A673 (cell line): ENCODE measurements at regions of chr16 and their contacts with region 1.

Region 1: GRCh38 chr16:636206-637080 is at the start of gene METTL26:
- DNase-seq: peak; percentile 98
- H3K4me3 ChIP-seq: peak within 1 kb of the TSS; percentile 95
- H3K27ac ChIP-seq: peak within 1 kb of the TSS; percentile 94
- H3K4me1 ChIP-seq: no peaks in the 10 kb centered on the region
- H3K27me3 ChIP-seq: no peaks in the 10 kb centered on the region
- CTCF ChIP-seq: 0 out of 2 replicates have a peak, but pooled peaks have one; percentile 11
- total RNA-seq, gene METTL26: 136 and 138 TPM in 2 replicates

Region 2: GRCh38 chr16:589658-590159 is 46.7 kb before region 1 on chr16 and contains the start of gene RAB40C:
- CTCF ChIA-PET with region 1: no interaction called
- POLR2A ChIA-PET with region 1: no interaction called
- intact Hi-C with region 1: loop called (anchors 5 kb)
- DNase-seq: peak; percentile 99
- H3K4me3 ChIP-seq: peak within 1 kb of the TSS; percentile 94
- H3K27ac ChIP-seq: peak within 1 kb of the TSS; percentile 99
- H3K4me1 ChIP-seq: peaks cover 29% of the 10 kb centered on the region
- H3K27me3 ChIP-seq: no peaks in the 10 kb centered on the region
- CTCF ChIP-seq: no peak
- total RNA-seq, gene RAB40C: 19.9 and 20.6 TPM in 2 replicates

Region 3: DNA sequence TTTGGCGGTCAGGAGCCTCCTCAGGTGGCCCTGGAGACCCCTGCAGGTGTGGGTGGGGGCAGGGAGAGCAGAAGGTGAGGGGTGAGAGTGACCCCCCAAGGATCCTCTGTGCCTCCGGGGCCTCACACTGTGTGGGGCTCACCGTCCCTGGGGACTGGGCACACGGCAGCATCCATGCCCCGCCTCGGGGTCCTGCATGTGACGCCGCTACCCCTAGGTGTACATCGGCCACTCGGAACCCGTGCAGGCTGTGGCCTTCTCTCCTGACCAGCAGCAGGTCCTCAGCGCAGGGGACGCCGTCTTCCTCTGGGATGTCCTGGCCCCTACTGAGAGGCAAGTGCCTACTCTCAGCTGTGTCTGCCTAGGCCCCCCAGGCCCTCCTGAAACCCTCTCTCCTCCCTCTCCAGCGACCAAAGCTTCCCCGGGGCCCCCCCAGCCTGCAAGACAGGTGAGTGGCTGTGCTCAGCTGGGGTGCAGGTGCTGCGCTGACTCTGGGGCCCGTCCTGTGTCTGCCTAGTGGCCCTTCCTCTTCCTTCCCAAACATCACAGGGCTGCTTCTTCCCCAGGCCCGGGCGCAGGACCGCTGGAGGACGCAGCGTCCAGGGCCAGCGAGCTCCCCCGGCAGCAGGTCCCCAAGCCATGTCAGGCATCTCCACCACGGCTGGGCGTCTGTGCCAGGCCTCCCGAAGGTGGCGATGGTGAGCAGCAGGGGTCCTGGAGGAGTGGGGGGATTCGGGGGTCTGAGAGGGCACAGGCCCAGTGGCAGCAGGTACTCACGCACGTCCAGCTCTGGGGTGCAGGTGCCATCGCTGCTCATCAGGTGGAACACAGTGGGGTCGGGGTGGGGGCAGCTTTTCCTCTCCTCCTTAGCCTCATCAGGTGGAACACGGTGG is 22.5 kb after region 1 on chr16:
- CTCF ChIA-PET with region 1: interaction called, 10 read pairs
- POLR2A ChIA-PET with region 1: no interaction called
- intact Hi-C with region 1: no loop called
- DNase-seq: no peak
- H3K4me3 ChIP-seq: no peak overlapping the region
- H3K27ac ChIP-seq: no peak overlapping the region
- H3K4me1 ChIP-seq: peaks cover 6% of the 10 kb centered on the region
- H3K27me3 ChIP-seq: no peaks in the 10 kb centered on the region
- CTCF ChIP-seq: 0 out of 2 replicates have a peak, but pooled peaks have one; percentile 13

Region 4: GRCh38 chr16:1119766-1120576 is 483.5 kb after region 1 on chr16:
- CTCF ChIA-PET with region 1: no interaction called
- POLR2A ChIA-PET with region 1: no interaction called
- intact Hi-C with region 1: no loop called
- DNase-seq: no peak
- H3K4me3 ChIP-seq: no peak overlapping the region
- H3K27ac ChIP-seq: no peak overlapping the region
- H3K4me1 ChIP-seq: no peaks in the 10 kb centered on the region
- H3K27me3 ChIP-seq: no peaks in the 10 kb centered on the region
- CTCF ChIP-seq: no peak